ENCODE measurements at regions of chr6 and their contacts with region 1.

Region 1: DNA sequence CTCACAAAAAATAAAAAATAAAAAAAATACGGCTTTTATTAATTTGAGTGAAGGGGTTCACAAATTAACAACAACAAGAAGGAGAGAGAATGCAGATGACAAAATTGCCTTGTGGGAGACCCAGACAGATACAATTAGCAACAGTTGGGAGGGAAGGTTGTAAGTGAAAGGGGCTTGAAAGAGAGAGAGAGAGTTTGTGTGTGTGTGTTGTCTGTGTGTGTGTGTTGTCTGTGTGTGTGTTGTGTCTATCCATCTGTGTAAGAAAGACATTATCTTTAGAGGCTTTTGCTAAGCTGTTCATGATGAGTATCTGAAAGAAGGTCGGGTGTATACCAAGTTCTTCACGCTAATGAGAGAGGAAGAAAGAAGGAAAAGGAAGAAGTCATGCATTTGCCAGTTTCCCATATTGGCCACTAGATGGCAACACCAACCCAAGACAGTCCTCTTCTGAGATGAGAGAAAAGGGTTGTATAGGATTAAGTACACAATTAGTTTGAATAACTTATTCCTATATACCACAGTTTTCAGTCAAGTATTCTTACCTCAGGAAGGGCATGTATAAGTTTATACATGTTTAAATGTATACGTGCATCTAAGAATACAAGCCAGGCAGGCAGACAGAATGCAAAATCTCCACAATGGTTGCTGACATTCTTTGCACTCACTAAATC is 63.7 kb upstream of the CD2AP start:
- DNase-seq: peak in 1 of 2 donors; percentile 34
- ATAC-seq: peak in 7 of 8 donors; percentile 68 to 95 (median 89)
- H3K4me3 ChIP-seq: peak overlapping the region in 9 of 10 donors; percentile 1 to 54 (median 47)
- H3K27ac ChIP-seq: peak overlapping the region in 8 of 10 donors; percentile 14 to 83 (median 60)
- H3K4me1 ChIP-seq: peaks cover 0 to 23% (median 0%) of the 10 kb centered on the region in 9 donors
- H3K27me3 ChIP-seq: no peaks in the 10 kb centered on the region
- CTCF ChIP-seq: peak; percentile 73 to 93 (median 87)

Region 2: DNA sequence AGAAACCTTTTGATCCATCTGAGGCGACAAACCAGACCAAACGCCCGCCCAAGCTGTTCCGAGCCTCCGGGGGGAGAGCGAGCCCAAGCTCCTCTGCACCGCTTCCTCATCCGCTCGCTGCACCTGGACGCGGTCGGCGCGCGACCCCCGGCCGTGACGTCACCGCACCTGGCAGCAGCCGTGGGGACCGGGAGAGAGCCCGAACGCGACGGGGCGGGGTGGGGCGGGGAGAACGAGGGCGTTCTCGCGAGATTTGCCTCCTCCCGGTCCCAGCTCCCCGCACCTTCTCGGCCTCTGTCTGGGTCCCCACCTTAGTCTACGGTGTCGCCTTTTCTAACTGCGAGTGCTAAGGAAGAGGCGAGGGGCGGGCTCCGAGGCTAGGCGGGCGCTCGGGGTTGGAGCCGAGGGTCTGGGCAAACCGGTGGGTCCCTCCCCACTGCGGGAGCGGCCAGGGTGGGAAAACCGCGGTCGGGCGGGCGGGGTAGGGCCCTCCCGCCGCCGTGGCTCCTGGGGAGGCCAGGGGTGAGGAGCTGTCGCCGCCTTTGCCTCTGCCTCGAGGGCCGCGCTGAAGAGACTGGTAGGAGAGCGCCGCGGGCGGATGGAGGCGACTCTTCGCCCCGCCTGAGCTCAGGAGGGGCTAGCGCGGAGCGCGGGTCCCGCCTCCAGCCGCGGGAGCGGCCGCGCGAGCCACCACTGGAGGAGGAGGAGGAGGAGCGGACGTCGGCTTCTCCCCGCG is 63.8 kb after region 1 on chr6 and contains the start of gene CD2AP:
- intact Hi-C with region 1: loop called in 6 of 10 experiments (anchors 2 to 10 kb)
- DNase-seq: peak; percentile 86 to 89
- ATAC-seq: peak; percentile 96 to 98 (median 96)
- H3K4me3 ChIP-seq: peak within 1 kb of the TSS; percentile 33 to 98 (median 90)
- H3K27ac ChIP-seq: peak within 1 kb of the TSS; percentile 95 to 99 (median 97)
- H3K4me1 ChIP-seq: peaks cover 0 to 57% (median 22%) of the 10 kb centered on the region in 9 donors
- H3K27me3 ChIP-seq: no peaks in the 10 kb centered on the region
- CTCF ChIP-seq: peak in 5 of 9 donors; percentile 12 to 48 (median 32)
- total RNA-seq, gene CD2AP: 8.5 to 15.6 (median 10.8) TPM

Region 3: DNA sequence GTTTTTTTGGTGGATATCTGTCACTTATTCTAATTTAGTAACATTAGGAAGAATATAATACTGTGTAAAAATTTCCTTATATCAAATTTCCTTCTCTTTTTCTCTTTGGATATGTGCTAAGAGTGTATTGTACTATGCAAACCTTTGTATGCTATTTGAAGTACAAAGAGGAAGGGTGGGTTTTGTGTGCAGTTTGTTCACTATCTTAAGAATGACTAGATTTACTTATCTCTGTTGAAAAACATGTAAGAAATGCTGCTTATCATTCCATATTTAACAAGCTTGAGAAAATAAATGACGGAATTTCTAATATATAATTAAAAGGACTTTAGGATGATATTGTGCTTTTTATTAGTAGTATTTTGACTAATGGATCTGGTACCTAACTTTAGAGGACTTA is 76.8 kb after region 1 on chr6:
- intact Hi-C with region 1: no loop called
- DNase-seq: no peak
- ATAC-seq: no peak
- H3K4me3 ChIP-seq: no peak overlapping the region
- H3K27ac ChIP-seq: no peak overlapping the region
- H3K4me1 ChIP-seq: peaks cover 0 to 29% (median 8%) of the 10 kb centered on the region in 9 donors
- H3K27me3 ChIP-seq: no peaks in the 10 kb centered on the region
- CTCF ChIP-seq: no peak

Region 4: DNA sequence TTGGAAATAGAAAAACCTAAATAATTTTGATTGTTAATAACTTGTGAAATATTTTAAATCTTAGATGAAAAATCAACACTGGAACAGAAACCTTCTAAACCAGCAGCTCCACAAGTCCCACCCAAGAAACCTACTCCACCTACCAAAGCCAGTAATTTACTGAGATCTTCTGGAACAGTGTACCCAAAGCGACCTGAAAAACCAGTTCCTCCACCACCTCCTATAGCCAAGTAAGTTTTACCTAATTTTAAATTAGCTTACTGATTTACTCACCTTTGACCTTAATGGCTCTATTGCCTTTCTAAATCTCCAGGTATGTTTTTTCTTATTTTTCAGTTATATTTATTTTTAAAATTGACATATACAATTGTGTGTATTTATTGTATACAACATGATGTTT is 181.9 kb after region 1 on chr6:
- intact Hi-C with region 1: loop called in 5 of 10 experiments (anchors 10 kb)
- DNase-seq: no peak
- ATAC-seq: no peak
- H3K4me3 ChIP-seq: no peak overlapping the region
- H3K27ac ChIP-seq: no peak overlapping the region
- H3K4me1 ChIP-seq: peaks cover 0 to 13% (median 0%) of the 10 kb centered on the region in 9 donors
- H3K27me3 ChIP-seq: no peaks in the 10 kb centered on the region
- CTCF ChIP-seq: no peak

Region 5: DNA sequence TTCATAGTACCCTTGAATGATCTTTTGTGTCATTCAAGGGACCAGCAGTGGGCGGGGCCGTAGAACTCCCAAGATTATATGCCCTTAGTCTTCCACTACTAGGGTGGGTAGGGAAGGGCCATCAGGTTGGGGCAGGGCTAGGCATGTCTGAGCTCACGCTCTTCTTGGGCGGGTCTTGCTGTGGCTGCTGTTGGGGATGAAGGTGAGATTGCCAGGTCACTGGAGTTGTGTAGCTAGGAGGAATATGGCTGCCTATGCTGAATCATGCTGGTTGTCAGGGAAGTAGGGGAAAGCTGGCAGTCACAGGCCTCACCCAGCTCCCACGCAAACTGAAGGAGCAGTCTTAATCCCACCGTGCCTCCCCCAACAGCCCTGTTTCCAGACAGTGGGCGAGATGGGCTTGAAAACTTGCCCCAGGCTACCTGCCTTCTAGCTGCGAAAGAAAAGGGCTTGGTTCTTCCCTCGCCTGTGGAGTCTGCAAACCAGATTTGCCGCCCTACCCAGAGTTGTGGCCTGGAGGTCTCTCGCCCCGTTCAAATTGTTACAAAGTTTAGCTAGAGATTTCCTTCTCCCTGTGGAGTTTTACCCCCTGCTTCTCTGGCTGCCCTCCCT is 208.1 kb after region 1 on chr6:
- intact Hi-C with region 1: loop called in 2 of 10 experiments (anchors 10 kb)
- DNase-seq: no peak
- ATAC-seq: no peak
- H3K4me3 ChIP-seq: no peak overlapping the region
- H3K27ac ChIP-seq: no peak overlapping the region
- H3K4me1 ChIP-seq: no peaks in the 10 kb centered on the region
- H3K27me3 ChIP-seq: no peaks in the 10 kb centered on the region
- CTCF ChIP-seq: no peak

Region 6: DNA sequence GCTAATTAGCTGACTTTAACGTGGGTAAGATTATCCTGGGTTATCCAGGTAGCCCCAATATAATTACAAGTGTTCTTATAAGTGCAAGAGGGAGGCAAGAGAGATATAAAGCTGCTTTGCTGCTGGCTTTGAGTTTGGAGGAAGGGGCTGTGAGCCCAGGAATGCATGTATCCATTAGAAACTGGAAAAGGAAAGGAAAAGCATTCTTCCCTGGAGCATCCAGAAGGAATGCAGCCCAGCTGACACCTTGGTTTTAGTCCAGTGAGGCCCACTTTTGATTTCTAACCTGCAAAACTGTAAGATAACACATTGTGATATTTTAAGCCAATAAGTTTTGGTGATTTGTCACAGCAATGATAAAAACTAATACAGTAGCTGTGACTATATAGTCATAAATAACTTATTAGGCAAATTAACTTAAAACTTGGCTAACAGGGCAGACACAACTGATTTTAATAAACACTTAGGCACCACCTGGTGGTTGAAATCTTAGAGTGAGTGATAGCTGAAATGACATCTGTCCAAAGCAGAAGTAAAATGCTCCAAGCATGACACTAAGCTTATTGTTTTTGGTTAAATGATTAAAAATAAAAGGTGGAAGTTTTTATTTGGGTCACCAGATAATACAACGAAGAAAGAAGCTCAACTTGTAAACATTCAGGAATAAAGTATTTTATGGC is 320.1 kb after region 1 on chr6:
- intact Hi-C with region 1: loop called in 5 of 10 experiments (anchors 5 to 10 kb)
- DNase-seq: peak in 1 of 2 donors; percentile 11
- ATAC-seq: no peak
- H3K4me3 ChIP-seq: no peak overlapping the region
- H3K27ac ChIP-seq: no peak overlapping the region
- H3K4me1 ChIP-seq: peaks cover 0 to 8% (median 4%) of the 10 kb centered on the region in 9 donors
- H3K27me3 ChIP-seq: no peaks in the 10 kb centered on the region
- CTCF ChIP-seq: peak in 8 of 9 donors; percentile 36 to 64 (median 46)

Region 7: DNA sequence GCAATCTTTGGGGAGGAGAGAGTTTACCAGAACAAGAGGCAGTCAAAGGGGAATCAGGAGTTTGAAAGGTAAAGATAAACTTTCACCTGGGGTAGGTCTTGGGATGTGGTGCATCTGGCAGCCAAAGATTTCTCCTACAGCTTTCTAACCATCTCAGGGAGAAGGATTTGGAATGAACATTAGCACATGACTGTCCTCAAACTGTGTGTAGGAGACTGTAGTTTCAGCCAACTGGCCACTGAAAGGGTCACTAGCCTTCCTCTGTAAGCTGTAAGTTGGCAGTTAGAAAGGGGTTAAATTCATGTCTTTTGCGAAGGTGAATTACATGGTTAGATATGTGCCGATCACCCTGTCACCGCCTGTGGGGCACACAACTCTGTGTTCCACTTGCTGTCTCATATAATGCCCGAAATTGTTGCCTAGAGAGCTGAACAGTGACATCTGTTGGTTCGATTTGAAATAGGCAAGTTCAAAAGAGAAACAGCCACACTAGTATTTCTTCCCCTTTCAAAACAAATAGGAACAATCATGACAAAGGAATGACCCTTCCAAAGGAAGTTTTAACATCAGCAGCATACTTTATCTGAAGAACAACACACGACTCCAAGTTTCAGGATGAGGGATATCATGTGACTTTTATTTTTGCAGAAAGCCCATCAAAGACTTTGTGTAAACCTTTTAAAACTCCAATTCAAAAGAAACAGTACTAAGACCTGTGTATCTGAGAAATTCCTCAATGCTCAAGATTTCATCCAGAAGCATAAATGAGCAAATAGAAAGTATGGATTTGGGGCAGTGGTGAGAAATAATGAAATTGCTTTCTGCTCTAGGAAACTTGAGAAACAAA is 366.8 kb after region 1 on chr6:
- intact Hi-C with region 1: loop called in 9 of 10 experiments (anchors 2 to 10 kb)
- DNase-seq: peak in 1 of 2 donors; percentile 23
- ATAC-seq: peak in 7 of 8 donors; percentile 81 to 86 (median 84)
- H3K4me3 ChIP-seq: peak overlapping the region in 1 of 10 donors; percentile 10
- H3K27ac ChIP-seq: peak overlapping the region in 1 of 10 donors; percentile 25
- H3K4me1 ChIP-seq: peaks cover 0 to 10% (median 4%) of the 10 kb centered on the region in 9 donors
- H3K27me3 ChIP-seq: peaks cover 0 to 6% (median 0%) of the 10 kb centered on the region in 7 donors
- CTCF ChIP-seq: peak; percentile 23 to 79 (median 66)

Measured in heart right ventricle (tissue), 16 donors.